GM10248 (cell line): ENCODE measurements at regions of chr4 and their contacts with region 1.

Region 1: GRCh38 chr4:101439926-101440325 is 92.6 kb upstream of the PPP3CA start:
- DNase-seq: no peak
- CTCF ChIP-seq: no peak

Region 2: DNA sequence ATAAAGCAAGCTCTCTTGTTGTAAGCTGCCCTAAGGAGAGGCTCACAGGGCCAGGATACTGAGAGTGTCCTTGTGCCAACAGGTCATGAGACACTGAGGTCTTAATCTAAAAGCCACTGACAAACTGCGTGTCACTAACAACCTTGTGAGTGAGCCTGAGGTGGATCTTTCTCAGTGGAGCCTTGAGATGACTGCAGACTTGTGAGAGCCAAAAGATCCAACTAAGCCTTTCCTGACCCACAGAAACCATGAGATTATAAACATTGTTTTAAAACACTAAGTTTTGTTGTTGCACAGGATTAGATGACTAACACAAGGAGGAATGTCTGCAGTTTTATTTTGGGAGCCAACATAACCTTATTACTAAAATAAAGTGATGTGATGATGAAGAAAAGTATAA is 734.9 kb after region 1 on chr4:
- CTCF ChIA-PET with region 1: no interaction called
- POLR2A ChIA-PET with region 1: interaction called, 10 read pairs
- DNase-seq: no peak
- CTCF ChIP-seq: no peak